AG04449 (cell line): ENCODE measurements at regions of chr6 and their contacts with region 1.

Region 1: DNA sequence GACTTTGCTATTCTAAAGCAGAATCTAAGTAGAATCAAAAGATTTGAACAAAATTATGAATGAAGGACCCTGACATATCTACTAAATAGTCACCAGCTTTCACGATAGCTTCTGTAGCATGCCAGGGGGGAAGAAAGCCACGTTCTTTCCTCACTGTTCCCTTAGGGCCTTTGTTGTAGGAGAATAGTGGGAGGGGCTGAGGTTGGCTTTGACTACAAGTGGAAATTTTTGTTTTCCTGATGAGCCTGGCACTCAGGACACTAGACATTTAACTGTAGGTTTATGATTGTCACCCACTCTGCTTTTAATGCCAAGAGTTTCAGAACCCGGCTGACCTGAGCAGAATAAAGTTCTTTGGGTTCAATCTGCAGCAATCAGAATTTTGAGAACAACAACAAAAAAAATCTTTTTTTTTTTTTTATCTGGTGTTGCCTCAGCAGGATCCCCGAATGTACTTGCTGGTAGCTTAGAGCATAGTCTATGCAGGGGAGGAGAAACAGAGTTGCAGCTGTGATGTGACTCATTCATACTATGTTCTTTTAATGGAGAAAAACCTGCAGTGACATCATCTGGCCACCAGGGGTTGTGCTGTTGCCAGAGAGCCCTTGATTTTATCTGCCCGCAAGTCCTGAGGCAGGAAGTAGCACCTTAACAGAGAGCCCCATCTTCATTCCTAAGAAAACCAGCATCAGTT is 38.5 kb downstream of the TPD52L1 start:
- DNase-seq: peak; percentile 42
- H3K4me3 ChIP-seq: no peak overlapping the region
- CTCF ChIP-seq: peak; percentile 64

Region 2: DNA sequence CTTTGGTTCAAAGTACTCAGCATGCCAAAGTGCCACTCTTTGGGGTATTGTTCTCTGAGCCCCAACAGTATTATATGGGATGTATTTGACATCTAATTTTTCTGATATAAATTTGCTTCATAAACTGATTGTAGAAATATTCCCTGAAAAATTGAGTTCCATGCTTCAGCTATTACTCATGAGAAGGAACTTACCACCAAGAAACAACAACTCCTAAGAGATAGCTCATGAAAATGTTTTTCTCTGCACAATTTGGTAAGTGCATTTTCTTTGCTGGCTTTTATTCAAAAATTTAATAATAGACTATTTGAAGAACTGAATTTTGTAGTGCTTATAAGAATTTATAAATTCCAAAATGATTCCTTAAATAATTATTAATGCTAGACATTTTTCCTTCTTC is 51.3 kb before region 1 on chr6:
- CTCF ChIA-PET with region 1: no interaction called
- POLR2A ChIA-PET with region 1: no interaction called
- DNase-seq: peak; percentile 51
- H3K4me3 ChIP-seq: no peak overlapping the region
- CTCF ChIP-seq: no peak

Region 3: DNA sequence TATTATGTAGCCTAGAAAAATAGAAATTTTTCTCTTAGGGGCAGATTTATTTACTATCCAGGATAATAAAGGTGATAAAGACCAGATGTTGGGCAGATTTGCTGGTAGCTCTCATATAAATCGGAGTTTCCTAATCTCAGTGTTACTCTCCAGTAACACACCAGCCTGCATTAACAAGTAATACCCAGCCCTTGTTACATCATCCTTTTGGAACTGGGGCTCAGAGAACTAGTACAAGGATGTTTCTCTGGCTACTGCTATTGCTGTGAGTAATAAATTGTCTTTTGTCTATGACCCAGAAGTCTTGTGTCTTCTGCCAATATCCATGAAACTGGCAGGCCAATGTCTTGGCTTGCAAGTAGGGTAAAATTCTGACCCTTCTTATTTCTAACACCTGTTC is 21.7 kb before region 1 on chr6:
- CTCF ChIA-PET with region 1: interaction called, 33 read pairs
- POLR2A ChIA-PET with region 1: no interaction called
- DNase-seq: peak; percentile 54
- H3K4me3 ChIP-seq: no peak overlapping the region
- CTCF ChIP-seq: no peak

Region 4: DNA sequence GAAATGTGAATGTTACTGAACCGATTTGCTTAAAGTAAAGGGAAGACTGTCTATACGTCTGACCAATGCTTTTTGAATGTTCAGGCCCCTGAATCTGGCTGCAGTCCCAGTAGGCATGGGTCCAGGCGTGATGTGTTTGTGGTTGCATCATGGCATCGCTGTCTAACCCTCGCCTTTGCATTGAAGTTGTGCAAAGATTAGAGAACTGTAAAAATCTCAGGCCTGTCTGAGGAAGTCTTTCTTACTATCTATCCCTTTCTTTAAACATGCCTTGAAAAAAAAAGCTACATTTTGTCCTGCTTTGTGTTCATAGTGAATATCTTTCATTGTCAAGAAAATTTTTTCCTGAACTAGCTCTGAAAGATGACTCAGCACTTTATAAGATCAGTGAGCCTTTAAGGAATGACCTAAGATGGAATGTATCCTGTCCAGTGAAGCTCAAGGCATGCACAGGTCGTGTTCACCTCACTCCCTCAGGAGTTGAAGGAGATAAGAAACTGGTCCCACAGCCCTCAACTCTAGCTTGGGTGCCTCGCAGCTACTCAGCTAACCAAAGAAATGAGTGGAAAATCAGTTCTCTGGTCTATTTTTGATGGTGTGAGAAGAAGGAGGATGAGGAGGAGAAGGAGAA is 10.0 kb after region 1 on chr6:
- CTCF ChIA-PET with region 1: interaction called, 22 read pairs
- POLR2A ChIA-PET with region 1: interaction called, 3 read pairs
- DNase-seq: peak; percentile 85
- H3K4me3 ChIP-seq: no peak overlapping the region
- CTCF ChIP-seq: no peak

Region 5: GRCh38 chr6:125207956-125208355 is 15.9 kb after region 1 on chr6:
- CTCF ChIA-PET with region 1: interaction called, 22 read pairs
- POLR2A ChIA-PET with region 1: no interaction called
- DNase-seq: no peak
- H3K4me3 ChIP-seq: no peak overlapping the region
- CTCF ChIP-seq: no peak

Region 6: DNA sequence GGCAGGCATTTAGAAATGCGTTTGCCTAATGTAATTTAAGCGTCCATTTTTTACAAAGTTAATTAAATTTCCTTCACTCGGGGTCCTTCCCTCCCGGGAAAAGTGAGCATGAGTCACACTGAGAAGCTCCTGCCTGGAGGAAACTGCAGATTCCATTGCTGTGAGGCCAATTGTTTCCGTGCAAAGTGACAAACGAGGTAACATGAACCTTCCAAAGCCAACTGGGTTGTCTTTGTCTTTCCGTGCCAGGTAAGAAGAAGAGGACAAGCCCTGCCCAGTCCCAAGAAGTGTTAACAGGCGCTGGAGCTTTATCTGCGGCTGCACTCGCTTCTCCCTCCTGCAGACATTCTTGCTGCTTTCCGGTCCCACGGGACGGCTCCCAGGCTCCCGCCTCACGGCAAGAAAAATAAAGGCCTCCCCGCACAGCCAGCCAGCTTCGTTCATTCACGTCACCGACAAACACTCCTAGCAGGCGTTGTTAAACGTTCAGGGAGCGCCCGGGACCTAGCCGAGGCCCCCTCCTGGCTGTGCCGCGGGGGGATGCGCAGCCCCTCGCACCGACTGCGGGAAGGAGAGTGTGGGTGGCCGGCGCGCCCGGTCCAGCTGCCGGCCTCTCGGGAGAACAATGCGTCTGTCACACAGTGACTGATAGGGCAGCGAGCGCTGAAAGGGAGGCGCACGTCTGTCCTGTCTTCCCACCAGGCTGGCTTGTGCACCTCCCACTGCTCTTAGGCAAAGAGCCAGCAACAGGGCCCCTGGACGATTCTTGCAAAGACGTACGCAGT is 171.2 kb after region 1 on chr6:
- CTCF ChIA-PET with region 1: no interaction called
- POLR2A ChIA-PET with region 1: no interaction called
- DNase-seq: no peak
- H3K4me3 ChIP-seq: peak overlapping the region; percentile 56
- CTCF ChIP-seq: no peak